ENCODE measurements at regions of chr15 and their contacts with region 1.

Region 1: DNA sequence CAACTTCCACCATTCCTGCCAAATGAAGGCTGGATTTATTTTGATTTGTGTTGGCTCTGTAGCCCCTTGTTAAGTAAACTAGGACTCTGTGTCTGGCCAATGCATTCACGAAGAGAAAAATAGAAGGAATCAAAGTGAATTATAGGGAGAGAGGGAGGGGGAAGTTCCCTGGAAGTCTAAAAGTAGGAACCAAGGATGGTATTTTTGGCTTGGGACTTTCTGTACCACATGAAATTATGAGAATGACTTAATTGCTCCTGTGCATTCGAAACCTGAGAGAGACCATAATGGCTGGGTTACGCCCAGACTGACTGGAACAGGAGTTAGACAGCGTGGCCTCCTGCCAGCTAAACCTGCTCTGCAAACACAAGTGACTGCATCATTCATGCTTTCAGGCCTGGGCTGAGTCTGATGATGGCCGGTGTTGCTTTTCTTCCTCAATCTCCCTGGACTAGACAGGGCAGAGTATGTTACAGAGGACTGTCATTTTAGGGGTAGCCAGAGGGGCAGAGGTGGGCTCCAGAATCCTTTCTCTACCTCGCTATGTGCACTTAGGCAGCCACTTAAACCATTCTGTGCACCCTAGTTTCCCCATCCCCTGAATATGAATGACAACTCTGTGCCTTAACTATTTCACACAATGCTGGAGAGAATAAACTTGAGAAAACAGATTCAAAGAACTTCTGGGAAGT is 58.9 kb downstream of the MYO1E start:
- DNase-seq: no peak
- ATAC-seq: peak; percentile 37
- H3K4me3 Mint-ChIP-seq: no peak overlapping the region
- H3K27ac Mint-ChIP-seq: peak overlapping the region; percentile 24
- H3K4me1 Mint-ChIP-seq: peaks cover 77% of the 10 kb centered on the region
- H3K27me3 Mint-ChIP-seq: no peaks in the 10 kb centered on the region
- CTCF ChIP-seq: no peak

Region 2: DNA sequence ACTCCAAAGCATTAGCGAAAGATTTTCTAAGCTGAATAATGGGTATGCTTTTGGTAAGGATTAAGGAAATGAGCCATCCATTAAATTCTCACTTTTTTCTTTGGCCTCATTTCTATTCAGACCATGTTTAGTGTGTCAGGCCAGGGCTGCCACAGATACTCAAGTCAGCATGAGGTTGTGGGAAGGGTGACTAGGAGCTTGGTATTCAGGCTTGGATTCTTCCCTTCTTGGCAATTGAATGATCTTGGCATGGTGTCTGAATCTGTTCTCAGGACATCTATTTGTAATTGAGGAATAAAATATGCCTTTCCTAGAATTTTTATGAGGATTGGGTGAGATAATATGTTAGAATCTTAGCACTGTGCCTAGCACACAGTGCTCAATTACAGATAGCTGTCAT is 197.6 kb before region 1 on chr15:
- CTCF ChIA-PET with region 1: no interaction called
- POLR2A ChIA-PET with region 1: no interaction called
- intact Hi-C with region 1: no loop called
- DNase-seq: no peak
- ATAC-seq: no peak
- H3K4me3 Mint-ChIP-seq: no peak overlapping the region
- H3K27ac Mint-ChIP-seq: no peak overlapping the region
- H3K4me1 Mint-ChIP-seq: peaks cover 6% of the 10 kb centered on the region
- H3K27me3 Mint-ChIP-seq: no peaks in the 10 kb centered on the region
- CTCF ChIP-seq: no peak

Region 3: GRCh38 chr15:59329570-59330350 is 16.0 kb after region 1 on chr15:
- CTCF ChIA-PET with region 1: no interaction called
- POLR2A ChIA-PET with region 1: interaction called, 4 read pairs
- intact Hi-C with region 1: loop called (anchors 1 kb)
- DNase-seq: no peak
- ATAC-seq: no peak
- H3K4me3 Mint-ChIP-seq: no peak overlapping the region
- H3K27ac Mint-ChIP-seq: no peak overlapping the region
- H3K4me1 Mint-ChIP-seq: peaks cover 84% of the 10 kb centered on the region
- H3K27me3 Mint-ChIP-seq: no peaks in the 10 kb centered on the region
- CTCF ChIP-seq: no peak

Region 4: GRCh38 chr15:59349680-59350420 is 36.1 kb after region 1 on chr15:
- CTCF ChIA-PET with region 1: no interaction called
- POLR2A ChIA-PET with region 1: no interaction called
- intact Hi-C with region 1: loop called (anchors 5 kb)
- DNase-seq: no peak
- ATAC-seq: peak; percentile 62
- H3K4me3 Mint-ChIP-seq: no peak overlapping the region
- H3K27ac Mint-ChIP-seq: peak overlapping the region; percentile 66
- H3K4me1 Mint-ChIP-seq: peaks cover 92% of the 10 kb centered on the region
- H3K27me3 Mint-ChIP-seq: no peaks in the 10 kb centered on the region
- CTCF ChIP-seq: no peak

Region 5: GRCh38 chr15:59688841-59689625 is 375.2 kb after region 1 on chr15 and contains the start of gene BNIP2:
- CTCF ChIA-PET with region 1: no interaction called
- POLR2A ChIA-PET with region 1: no interaction called
- intact Hi-C with region 1: no loop called
- DNase-seq: peak; percentile 97
- ATAC-seq: peak; percentile 87
- H3K4me3 Mint-ChIP-seq: peak within 1 kb of the TSS; percentile 92
- H3K27ac Mint-ChIP-seq: peak within 1 kb of the TSS; percentile 96
- H3K4me1 Mint-ChIP-seq: peaks cover 52% of the 10 kb centered on the region
- H3K27me3 Mint-ChIP-seq: no peaks in the 10 kb centered on the region
- CTCF ChIP-seq: no peak
- total RNA-seq, gene BNIP2: 80.1 and 82.9 TPM in 2 replicates

Measured in activated B cell treated with CpG ODN at 0.5 μM for 24 hours (primary cell).